ENCODE measurements at regions of chr2 and their contacts with region 1.

Region 1: GRCh38 chr2:73071360-73072133 is at the start of gene SFXN5:
- DNase-seq: peak; percentile 99
- H3K4me3 Mint-ChIP-seq: peak within 1 kb of the TSS; percentile 89
- H3K27ac Mint-ChIP-seq: peak within 1 kb of the TSS; percentile 92
- H3K4me1 Mint-ChIP-seq: peaks cover 20% of the 10 kb centered on the region
- H3K27me3 Mint-ChIP-seq: peaks cover 12% of the 10 kb centered on the region
- total RNA-seq, gene SFXN5: 11.6 and 14.1 TPM in 2 replicates

Region 2: DNA sequence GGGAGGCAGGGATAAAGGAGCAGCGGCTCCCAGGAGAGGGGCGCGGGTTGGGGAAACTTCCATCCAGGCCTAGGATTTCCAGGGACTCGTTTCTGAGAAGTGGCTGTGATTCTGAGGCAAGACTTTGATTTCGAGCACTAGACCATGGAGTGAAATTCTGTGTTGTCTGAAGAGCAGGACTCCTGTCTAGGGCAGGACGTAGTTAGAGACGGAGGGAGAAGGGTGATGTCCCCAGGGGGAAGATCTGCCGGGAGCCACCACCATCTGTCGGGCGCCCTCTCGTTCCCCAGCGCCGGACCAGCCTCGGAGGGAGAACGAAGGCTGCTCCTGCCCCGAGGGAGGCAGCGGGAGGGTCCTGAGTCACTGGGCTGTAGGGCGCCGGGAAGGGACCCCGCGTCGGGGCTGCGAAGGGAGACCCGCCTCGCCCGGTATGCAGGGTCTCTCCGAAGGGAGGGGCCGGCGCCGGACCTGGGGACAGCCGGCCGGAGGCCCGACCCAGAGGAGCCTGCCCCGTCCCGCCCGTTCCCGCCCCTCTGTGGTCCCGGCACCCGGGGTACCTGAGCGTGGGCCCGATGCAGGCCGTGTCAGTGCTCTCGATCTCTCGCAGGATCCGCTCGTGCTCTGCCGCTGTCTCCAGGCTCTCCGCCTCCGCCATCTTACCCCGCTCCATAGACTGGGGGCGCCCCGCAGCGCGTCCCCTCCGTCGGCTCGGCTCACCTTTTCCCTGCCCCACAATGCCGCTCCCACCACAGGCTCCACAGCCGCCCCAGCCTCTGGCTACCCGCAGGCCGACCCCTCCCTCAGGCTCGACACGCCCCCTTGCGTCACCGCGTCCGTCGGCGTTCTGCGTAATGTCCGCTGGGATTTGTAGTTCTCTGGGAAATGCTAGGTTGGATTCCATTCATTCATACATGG is 246.0 kb before region 1 on chr2 and contains the start of gene EXOC6B:
- intact Hi-C with region 1: loop called (anchors 5 kb)
- DNase-seq: peak; percentile 96
- H3K4me3 Mint-ChIP-seq: peak within 1 kb of the TSS; percentile 95
- H3K27ac Mint-ChIP-seq: peak within 1 kb of the TSS; percentile 87
- H3K4me1 Mint-ChIP-seq: peaks cover 45% of the 10 kb centered on the region
- H3K27me3 Mint-ChIP-seq: peaks cover 4% of the 10 kb centered on the region
- total RNA-seq, gene EXOC6B: 7.8 and 8.4 TPM in 2 replicates

Region 3: DNA sequence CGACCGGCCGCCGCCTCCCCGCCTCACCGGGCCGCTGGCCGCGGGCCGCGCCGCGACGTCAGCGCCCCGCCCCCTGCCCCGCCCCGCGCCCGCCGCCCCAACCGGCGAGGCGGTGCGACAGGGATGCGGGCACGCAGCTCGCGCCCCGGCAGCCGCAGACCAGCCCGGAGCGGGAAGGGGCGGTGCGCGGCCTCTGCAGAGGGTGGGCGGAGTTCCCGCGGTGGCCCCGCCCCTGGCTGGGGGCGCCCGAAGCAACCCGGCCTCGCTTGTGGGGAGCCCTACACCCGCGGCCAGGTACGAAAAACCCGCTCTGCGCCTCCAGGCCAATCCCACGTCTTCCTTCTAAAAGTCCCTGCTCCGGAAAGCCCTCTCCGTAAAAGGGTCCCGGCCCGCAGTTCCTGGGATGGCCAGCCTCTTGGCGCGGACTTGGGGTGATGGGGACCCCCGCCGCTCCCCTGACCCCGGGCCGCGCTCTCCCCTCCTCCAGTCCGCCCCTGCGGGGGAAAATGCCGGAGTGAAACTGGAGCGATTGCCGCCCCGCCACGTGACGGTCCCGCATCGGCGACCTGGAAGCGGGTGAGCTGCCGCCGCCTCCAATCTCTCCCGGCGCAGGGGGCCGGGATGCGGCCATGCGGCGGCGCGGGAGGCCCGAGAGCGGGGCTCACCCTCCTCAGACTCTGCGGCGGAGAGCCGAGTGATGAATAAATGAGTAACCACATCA is 41.5 kb after region 1 on chr2 and contains the start of gene RAB11FIP5:
- intact Hi-C with region 1: loop called (anchors 1 kb)
- DNase-seq: peak; percentile 95
- H3K4me3 Mint-ChIP-seq: peak within 1 kb of the TSS; percentile 88
- H3K27ac Mint-ChIP-seq: peak within 1 kb of the TSS; percentile 59
- H3K4me1 Mint-ChIP-seq: peaks cover 25% of the 10 kb centered on the region
- H3K27me3 Mint-ChIP-seq: peaks cover 11% of the 10 kb centered on the region
- total RNA-seq, gene RAB11FIP5: 13.4 and 13.8 TPM in 2 replicates

Region 4: DNA sequence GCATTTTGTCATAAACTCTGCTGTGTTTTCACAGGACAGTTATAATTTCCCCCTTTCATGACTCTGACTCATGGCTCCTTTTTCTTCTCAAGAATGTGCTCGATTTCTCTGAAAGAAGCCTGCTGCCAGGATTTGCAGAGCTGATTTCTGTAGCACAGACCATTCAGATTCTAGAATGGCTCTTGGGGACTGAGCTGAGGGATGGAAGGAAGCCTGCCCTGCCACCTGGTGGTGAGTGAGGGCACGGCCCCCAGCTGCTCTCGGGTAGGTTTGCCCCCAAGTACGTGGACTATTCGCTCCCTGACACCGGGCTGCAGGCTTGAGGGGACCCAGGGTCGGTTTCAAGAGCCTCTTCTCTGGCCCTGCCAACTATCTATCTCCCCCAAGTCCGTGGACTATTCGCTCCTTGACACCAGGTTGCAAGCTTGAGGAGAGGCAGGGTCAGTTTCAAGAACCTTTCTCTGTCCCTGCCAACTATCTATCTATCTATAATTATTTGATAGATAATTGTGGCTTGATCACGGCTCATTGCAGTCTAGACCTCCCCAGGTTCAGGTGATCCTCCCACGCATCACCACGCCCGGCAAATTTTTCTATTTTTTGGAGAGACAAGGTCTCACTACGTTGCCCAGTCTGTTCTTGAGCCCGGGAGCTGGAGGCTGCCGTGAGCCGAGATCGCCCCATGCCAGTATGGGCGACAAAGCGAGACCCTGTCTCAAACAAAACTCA is 141.1 kb after region 1 on chr2:
- intact Hi-C with region 1: loop called (anchors 1 kb)
- DNase-seq: peak; percentile 91
- H3K4me3 Mint-ChIP-seq: no peak overlapping the region
- H3K27ac Mint-ChIP-seq: peak overlapping the region; percentile 34
- H3K4me1 Mint-ChIP-seq: peaks cover 22% of the 10 kb centered on the region
- H3K27me3 Mint-ChIP-seq: peaks cover 6% of the 10 kb centered on the region

Region 5: GRCh38 chr2:73736855-73737779 is 665.6 kb after region 1 on chr2 and contains the start of gene TPRKB:
- intact Hi-C with region 1: loop called (anchors 2 kb)
- DNase-seq: peak; percentile 98
- H3K4me3 Mint-ChIP-seq: peak within 1 kb of the TSS; percentile 100
- H3K27ac Mint-ChIP-seq: peak within 1 kb of the TSS; percentile 91
- H3K4me1 Mint-ChIP-seq: peaks cover 10% of the 10 kb centered on the region
- H3K27me3 Mint-ChIP-seq: no peaks in the 10 kb centered on the region
- total RNA-seq, gene TPRKB: 37.6 and 38.5 TPM in 2 replicates